Caco-2 (cell line): ENCODE measurements at regions of chr10 and their contacts with region 1.

Region 1: DNA sequence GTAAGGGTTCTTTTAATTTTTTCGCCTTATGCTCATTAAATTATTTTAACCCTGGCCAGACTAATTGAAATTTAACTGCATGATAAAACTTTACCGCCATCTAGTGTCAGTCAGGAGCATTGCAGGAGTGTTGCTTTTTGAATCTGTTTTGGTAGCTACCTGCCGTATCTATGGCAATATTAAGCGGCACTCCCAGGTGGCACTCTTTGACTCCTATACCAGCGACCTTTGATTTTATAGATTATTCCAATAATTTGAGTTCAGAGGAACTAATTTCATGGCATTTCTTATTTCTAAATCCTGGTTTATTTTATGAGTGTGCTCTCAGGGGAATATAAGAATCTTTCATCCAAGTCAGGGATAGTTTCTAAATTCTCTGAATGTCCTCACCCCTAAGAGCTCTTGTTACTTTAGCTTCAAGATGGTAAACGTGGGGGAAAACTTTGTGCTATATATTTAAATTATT is 198.9 kb downstream of the REEP3 start:
- DNase-seq: peak; percentile 74 to 84
- H3K4me3 ChIP-seq: no peak overlapping the region
- H3K4me3 Mint-ChIP-seq: no peak overlapping the region
- H3K27ac Mint-ChIP-seq: peak overlapping the region; percentile 26
- H3K4me1 ChIP-seq: peaks cover 31% of the 10 kb centered on the region
- H3K4me1 Mint-ChIP-seq: peaks cover 23% of the 10 kb centered on the region
- H3K27me3 ChIP-seq: no peaks in the 10 kb centered on the region
- H3K27me3 Mint-ChIP-seq: no peaks in the 10 kb centered on the region
- CTCF ChIP-seq: peak; percentile 99

Region 2: GRCh38 chr10:63217120-63217605 is 502.9 kb before region 1 on chr10:
- CTCF ChIA-PET with region 1: interaction called, 3 read pairs
- POLR2A ChIA-PET with region 1: no interaction called
- intact Hi-C with region 1: loop called (anchors 1 kb)
- DNase-seq: peak in 1 of 2 experiments; percentile 64
- H3K4me3 ChIP-seq: no peak overlapping the region
- H3K4me3 Mint-ChIP-seq: no peak overlapping the region
- H3K27ac Mint-ChIP-seq: no peak overlapping the region
- H3K4me1 ChIP-seq: no peaks in the 10 kb centered on the region; the same call in 1 of the 2 replicates
- H3K4me1 Mint-ChIP-seq: no peaks in the 10 kb centered on the region
- H3K27me3 ChIP-seq: no peaks in the 10 kb centered on the region
- H3K27me3 Mint-ChIP-seq: no peaks in the 10 kb centered on the region
- CTCF ChIP-seq: peak; percentile 74 to 78

Region 3: DNA sequence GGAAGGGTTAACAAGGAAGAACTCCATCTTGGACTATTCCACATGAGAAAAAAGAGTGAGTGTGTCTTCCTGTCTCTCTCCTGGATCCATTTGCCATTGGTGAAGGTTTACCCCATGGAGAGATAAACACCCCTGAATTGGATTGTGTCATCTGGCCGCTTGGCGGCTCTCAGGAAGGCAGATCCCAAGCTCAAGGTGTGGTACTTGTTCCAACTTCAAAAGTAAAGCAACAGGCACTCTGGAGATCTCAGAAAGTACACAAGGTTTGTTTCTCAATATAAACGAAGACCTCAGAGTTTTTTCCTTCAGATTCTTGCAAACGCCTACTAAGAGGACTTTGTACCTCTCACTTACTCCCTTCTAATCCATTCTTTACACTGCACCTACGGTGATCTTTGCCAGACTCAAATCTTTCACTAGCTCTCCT is 82.2 kb before region 1 on chr10:
- CTCF ChIA-PET with region 1: interaction called, 22 read pairs
- POLR2A ChIA-PET with region 1: interaction called, 5 read pairs
- intact Hi-C with region 1: loop called (anchors 1 kb)
- DNase-seq: peak; percentile 74 to 76
- H3K4me3 ChIP-seq: peak overlapping the region; percentile 6; the same call in 1 of the 2 replicates
- H3K4me3 Mint-ChIP-seq: peak overlapping the region; percentile 40
- H3K27ac Mint-ChIP-seq: peak overlapping the region; percentile 17
- H3K4me1 ChIP-seq: peaks cover 29% of the 10 kb centered on the region
- H3K4me1 Mint-ChIP-seq: peaks cover 33% of the 10 kb centered on the region
- H3K27me3 ChIP-seq: no peaks in the 10 kb centered on the region
- H3K27me3 Mint-ChIP-seq: no peaks in the 10 kb centered on the region
- CTCF ChIP-seq: peak; percentile 13 to 51

Region 4: DNA sequence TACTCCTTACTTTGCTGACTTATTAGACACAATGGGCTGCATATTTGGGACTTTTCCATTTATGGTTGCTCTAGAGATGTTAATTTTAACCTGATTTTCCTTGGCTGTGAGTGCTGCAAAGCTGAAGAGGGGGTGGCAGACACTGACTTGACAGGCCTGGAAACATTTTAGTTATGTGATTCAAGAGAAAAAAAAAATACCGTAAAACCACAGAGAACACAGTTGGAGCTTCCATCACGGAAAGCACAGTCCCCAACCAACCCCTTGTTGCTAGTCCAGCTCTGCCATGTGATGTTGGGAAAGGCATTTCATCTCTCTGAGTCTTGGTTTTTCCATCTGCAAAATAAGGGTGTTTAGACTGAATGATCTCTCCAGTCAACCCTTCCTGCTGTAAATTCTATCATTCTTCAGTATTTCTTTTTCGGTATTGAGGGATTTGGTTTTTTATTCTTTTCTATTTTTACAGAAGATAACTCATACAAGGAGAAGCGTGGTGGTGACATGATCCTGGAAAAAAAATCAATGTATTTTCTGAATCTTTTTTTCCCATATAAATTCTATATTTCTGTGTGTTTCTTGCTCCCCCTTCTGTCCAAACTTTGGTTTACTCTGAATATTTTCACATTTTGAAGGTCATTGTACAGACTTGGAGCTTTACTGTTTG is 47.2 kb after region 1 on chr10:
- CTCF ChIA-PET with region 1: interaction called, 67 read pairs
- POLR2A ChIA-PET with region 1: no interaction called
- intact Hi-C with region 1: loop called (anchors 1 kb)
- DNase-seq: peak in 1 of 2 experiments; percentile 36
- H3K4me3 ChIP-seq: no peak overlapping the region
- H3K4me3 Mint-ChIP-seq: no peak overlapping the region
- H3K27ac Mint-ChIP-seq: no peak overlapping the region
- H3K4me1 ChIP-seq: peaks cover 20% of the 10 kb centered on the region
- H3K4me1 Mint-ChIP-seq: peaks cover 32% of the 10 kb centered on the region
- H3K27me3 ChIP-seq: no peaks in the 10 kb centered on the region
- H3K27me3 Mint-ChIP-seq: no peaks in the 10 kb centered on the region
- CTCF ChIP-seq: peak; percentile 51 to 65